ENCODE measurements at regions of chr6 and their contacts with region 1.

Region 1: GRCh38 chr6:81894788-81895271 is 142.3 kb upstream of the TENT5A start:
- DNase-seq: peak; percentile 47 to 69
- ATAC-seq: peak; percentile 80 to 97 (median 90)
- H3K4me3 ChIP-seq: peak overlapping the region in 5 of 10 donors; percentile 9 to 34 (median 23)
- H3K27ac ChIP-seq: peak overlapping the region; percentile 57 to 88 (median 83)
- H3K4me1 ChIP-seq: peaks cover 2 to 66% (median 32%) of the 10 kb centered on the region in 9 donors
- H3K27me3 ChIP-seq: no peaks in the 10 kb centered on the region
- CTCF ChIP-seq: no peak

Region 2: GRCh38 chr6:81625216-81625615 is 269.6 kb before region 1 on chr6:
- intact Hi-C with region 1: no loop called
- DNase-seq: no peak
- ATAC-seq: no peak
- H3K4me3 ChIP-seq: no peak overlapping the region
- H3K27ac ChIP-seq: no peak overlapping the region
- H3K4me1 ChIP-seq: peaks cover 0 to 3% (median 0%) of the 10 kb centered on the region in 9 donors
- H3K27me3 ChIP-seq: no peaks in the 10 kb centered on the region
- CTCF ChIP-seq: no peak

Region 3: GRCh38 chr6:81834141-81834681 is 60.6 kb before region 1 on chr6:
- intact Hi-C with region 1: loop called in 2 of 10 experiments (anchors 2 to 5 kb)
- DNase-seq: peak; percentile 59 to 69
- ATAC-seq: peak; percentile 74 to 100 (median 97)
- H3K4me3 ChIP-seq: no peak overlapping the region
- H3K27ac ChIP-seq: peak overlapping the region; percentile 65 to 82 (median 74)
- H3K4me1 ChIP-seq: peaks cover 0 to 29% (median 10%) of the 10 kb centered on the region in 9 donors
- H3K27me3 ChIP-seq: no peaks in the 10 kb centered on the region
- CTCF ChIP-seq: peak in 3 of 9 donors; percentile 28 to 35 (median 29)

Region 4: DNA sequence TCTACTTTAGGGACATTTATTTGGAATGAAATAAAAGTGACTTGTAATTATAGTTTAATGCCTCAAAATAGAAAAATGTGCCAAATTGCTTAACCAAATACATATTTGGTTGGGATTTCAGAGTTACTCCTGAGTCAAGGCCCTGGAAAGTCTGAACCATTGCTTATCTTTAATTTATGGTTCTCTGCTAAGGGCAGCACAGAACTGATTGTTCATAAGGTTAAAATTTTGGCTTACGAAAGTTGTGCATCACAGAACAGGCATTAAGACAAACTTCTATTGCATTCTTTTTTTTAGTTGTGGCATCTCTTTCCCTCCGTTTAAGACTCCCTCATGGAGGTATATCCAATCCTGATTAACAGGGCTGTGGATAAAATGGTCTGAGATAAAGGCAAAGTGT is 50.1 kb before region 1 on chr6:
- intact Hi-C with region 1: loop called in 1 of 10 experiments (anchors 5 kb)
- DNase-seq: no peak
- ATAC-seq: peak in 1 of 8 donors; percentile 26
- H3K4me3 ChIP-seq: no peak overlapping the region
- H3K27ac ChIP-seq: no peak overlapping the region
- H3K4me1 ChIP-seq: peaks cover 0 to 5% (median 0%) of the 10 kb centered on the region in 9 donors
- H3K27me3 ChIP-seq: no peaks in the 10 kb centered on the region
- CTCF ChIP-seq: no peak

Region 5: DNA sequence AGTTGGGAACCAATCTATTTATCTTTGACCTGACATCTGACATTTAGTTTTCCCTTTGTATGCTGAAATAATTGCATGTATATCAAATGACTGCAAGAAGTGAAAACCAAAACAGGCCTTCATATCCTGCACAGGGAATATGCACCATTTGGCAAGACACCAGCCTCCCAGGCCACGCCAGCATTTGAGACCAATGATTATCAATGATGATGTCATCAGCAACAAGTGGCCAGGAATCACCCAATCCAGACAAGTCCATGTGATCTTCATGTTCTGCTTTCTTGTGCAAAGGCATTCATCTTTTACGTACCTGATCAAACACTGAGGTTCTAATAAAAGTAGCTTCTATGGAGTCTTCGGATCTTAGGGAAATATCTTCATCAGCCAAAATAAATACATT is 34.9 kb before region 1 on chr6:
- intact Hi-C with region 1: loop called in 1 of 10 experiments (anchors 5 kb)
- DNase-seq: peak; percentile 43
- ATAC-seq: peak in 5 of 8 donors; percentile 32 to 57 (median 53)
- H3K4me3 ChIP-seq: no peak overlapping the region
- H3K27ac ChIP-seq: peak overlapping the region in 6 of 10 donors; percentile 22 to 57 (median 28)
- H3K4me1 ChIP-seq: peaks cover 3 to 47% (median 21%) of the 10 kb centered on the region in 9 donors
- H3K27me3 ChIP-seq: no peaks in the 10 kb centered on the region
- CTCF ChIP-seq: no peak

Region 6: DNA sequence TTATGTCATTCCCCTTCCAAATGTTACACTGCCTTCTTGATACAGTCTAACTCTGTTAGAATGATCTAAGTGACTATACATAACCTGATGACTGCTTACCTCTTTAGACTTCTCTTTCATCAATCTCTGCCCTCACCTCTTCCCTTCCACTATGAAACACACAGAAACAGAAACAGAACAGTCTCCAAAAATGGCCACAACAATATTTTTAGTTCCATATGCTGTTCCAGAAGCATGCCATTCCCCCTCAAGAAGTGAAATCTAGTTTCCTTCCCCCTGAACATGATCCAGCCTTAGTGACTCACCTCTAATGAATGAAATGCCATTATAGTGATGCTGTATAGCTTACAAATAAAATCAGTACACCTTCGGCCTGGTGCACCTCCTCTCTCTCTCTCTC is 87.0 kb after region 1 on chr6:
- intact Hi-C with region 1: no loop called
- DNase-seq: no peak
- ATAC-seq: peak in 1 of 8 donors; percentile 67
- H3K4me3 ChIP-seq: no peak overlapping the region
- H3K27ac ChIP-seq: no peak overlapping the region
- H3K4me1 ChIP-seq: peaks cover 0 to 8% (median 0%) of the 10 kb centered on the region in 9 donors
- H3K27me3 ChIP-seq: no peaks in the 10 kb centered on the region
- CTCF ChIP-seq: no peak

Region 7: GRCh38 chr6:82006027-82006738 is 111.4 kb after region 1 on chr6:
- intact Hi-C with region 1: loop called in 1 of 10 experiments (anchors 10 kb)
- DNase-seq: no peak
- ATAC-seq: peak in 7 of 8 donors; percentile 35 to 64 (median 54)
- H3K4me3 ChIP-seq: no peak overlapping the region
- H3K27ac ChIP-seq: no peak overlapping the region
- H3K4me1 ChIP-seq: no peaks in the 10 kb centered on the region
- H3K27me3 ChIP-seq: no peaks in the 10 kb centered on the region
- CTCF ChIP-seq: peak in 8 of 9 donors; percentile 29 to 61 (median 48)

Region 8: DNA sequence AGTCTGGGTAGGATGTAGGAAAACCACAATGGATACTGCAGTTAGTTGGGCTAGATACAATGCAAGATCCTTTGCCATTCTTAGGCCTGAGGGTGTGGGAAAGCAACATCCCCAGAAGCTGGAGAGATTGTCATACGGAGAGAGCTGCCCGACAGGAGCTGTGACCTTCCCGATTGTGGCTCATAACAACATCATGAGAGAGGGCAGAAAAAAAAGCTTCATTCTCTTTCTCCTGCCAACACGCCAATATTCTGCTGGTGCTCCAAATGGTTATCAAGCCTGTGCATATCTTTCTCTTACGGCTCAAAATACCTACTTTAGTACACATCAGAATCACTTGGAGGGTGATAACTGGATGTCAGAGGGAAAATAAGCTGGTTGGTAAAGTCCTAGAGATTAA is 271.7 kb after region 1 on chr6:
- intact Hi-C with region 1: loop called in 2 of 10 experiments (anchors 10 kb)
- DNase-seq: peak in 1 of 2 donors; percentile 35
- ATAC-seq: peak; percentile 69 to 93 (median 84)
- H3K4me3 ChIP-seq: no peak overlapping the region
- H3K27ac ChIP-seq: peak overlapping the region; percentile 2 to 78 (median 60)
- H3K4me1 ChIP-seq: peaks cover 0 to 11% (median 0%) of the 10 kb centered on the region in 9 donors
- H3K27me3 ChIP-seq: no peaks in the 10 kb centered on the region
- CTCF ChIP-seq: no peak

Measured in heart right ventricle (tissue), 16 donors.